RWPE1 (cell line): ENCODE measurements at regions of chr16 and their contacts with region 1.

Region 1: GRCh38 chr16:83095941-83096692 is 469.3 kb downstream of the CDH13 start:
- DNase-seq: peak; percentile 36
- H3K27ac ChIP-seq: no peak overlapping the region
- CTCF ChIP-seq: no peak

Region 2: GRCh38 chr16:83085660-83086059 is 10.5 kb before region 1 on chr16:
- CTCF ChIA-PET with region 1: no interaction called
- POLR2A ChIA-PET with region 1: interaction called, 12 read pairs
- DNase-seq: no peak
- H3K27ac ChIP-seq: no peak overlapping the region
- CTCF ChIP-seq: no peak